Activated CD4-positive, alpha-beta T cell treated with anti-CD3 and anti-CD28 coated beads, Interleukin-2, amount 10 ng/mL, durations not matched to agents 7 days and 5 days (primary cell): ENCODE measurements at regions of chr9 and their contacts with region 1.

Region 1: GRCh38 chr9:93003552-93004407 is 54.7 kb upstream of the SUSD3 start:
- DNase-seq: peak; percentile 71
- H3K4me3 Mint-ChIP-seq: peak overlapping the region; percentile 32
- H3K27ac Mint-ChIP-seq: peak overlapping the region; percentile 83
- H3K4me1 Mint-ChIP-seq: peaks cover 56% of the 10 kb centered on the region
- H3K27me3 Mint-ChIP-seq: no peaks in the 10 kb centered on the region

Region 2: DNA sequence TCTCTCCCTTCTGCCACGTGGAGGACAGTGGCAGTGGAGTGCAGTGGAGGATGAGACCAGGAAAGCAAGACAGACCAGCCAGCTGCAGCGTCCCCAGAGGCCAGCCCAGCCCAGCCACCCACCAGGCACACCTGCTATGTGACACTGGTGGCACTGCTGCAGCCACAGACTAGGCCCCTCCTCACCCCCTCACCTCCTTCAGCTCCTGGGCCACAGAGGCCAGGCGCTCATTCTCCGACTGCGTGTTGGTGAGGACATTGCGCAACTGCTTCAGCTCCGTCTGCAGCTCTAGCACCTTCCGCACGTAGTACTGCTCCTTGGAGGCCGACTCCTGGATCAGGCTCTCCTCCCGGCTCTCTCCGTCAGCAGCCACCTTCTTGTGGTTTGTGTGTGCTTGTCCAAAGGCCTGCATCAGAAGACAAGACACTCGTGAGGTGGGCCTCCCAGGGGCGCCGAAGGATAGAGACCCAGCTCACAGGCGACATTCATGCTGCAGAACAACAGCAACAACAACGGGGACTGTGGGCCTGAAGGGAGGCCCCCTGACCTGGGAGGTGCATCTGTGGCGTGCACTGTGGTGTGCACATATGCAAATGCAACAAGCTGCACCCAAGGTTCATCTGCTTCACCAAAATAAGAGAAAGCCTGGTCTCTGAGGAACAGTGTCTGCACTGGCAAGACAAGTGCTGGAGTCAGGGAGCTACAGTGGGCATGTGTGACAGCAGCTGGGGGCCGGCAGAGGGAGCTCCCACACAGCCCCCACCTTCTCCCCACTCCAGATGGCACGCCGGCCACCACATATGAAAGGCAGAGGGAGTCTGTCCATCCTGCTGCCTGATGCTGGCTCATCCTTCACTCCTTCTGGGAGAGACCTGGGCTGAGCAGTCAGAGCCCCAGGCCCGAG is 274.7 kb before region 1 on chr9:
- CTCF ChIA-PET with region 1: no interaction called
- POLR2A ChIA-PET with region 1: no interaction called
- DNase-seq: no peak
- H3K4me3 Mint-ChIP-seq: no peak overlapping the region
- H3K27ac Mint-ChIP-seq: peak overlapping the region; percentile 36
- H3K4me1 Mint-ChIP-seq: peaks cover 25% of the 10 kb centered on the region
- H3K27me3 Mint-ChIP-seq: no peaks in the 10 kb centered on the region

Region 3: GRCh38 chr9:92942688-92943616 is 60.8 kb before region 1 on chr9:
- CTCF ChIA-PET with region 1: no interaction called
- POLR2A ChIA-PET with region 1: no interaction called
- DNase-seq: no peak
- H3K4me3 Mint-ChIP-seq: no peak overlapping the region
- H3K27ac Mint-ChIP-seq: no peak overlapping the region
- H3K4me1 Mint-ChIP-seq: peaks cover 16% of the 10 kb centered on the region
- H3K27me3 Mint-ChIP-seq: peaks cover 10% of the 10 kb centered on the region

Region 4: GRCh38 chr9:93013856-93014582 is 10.2 kb after region 1 on chr9:
- CTCF ChIA-PET with region 1: interaction called, 25 read pairs
- POLR2A ChIA-PET with region 1: no interaction called
- DNase-seq: no peak
- H3K4me3 Mint-ChIP-seq: no peak overlapping the region
- H3K27ac Mint-ChIP-seq: peak overlapping the region; percentile 58
- H3K4me1 Mint-ChIP-seq: peaks cover 15% of the 10 kb centered on the region
- H3K27me3 Mint-ChIP-seq: no peaks in the 10 kb centered on the region

Region 5: GRCh38 chr9:93020771-93021670 is 17.2 kb after region 1 on chr9:
- CTCF ChIA-PET with region 1: interaction called, 25 read pairs
- POLR2A ChIA-PET with region 1: no interaction called
- DNase-seq: peak; percentile 43
- H3K4me3 Mint-ChIP-seq: no peak overlapping the region
- H3K27ac Mint-ChIP-seq: peak overlapping the region; percentile 79
- H3K4me1 Mint-ChIP-seq: peaks cover 62% of the 10 kb centered on the region
- H3K27me3 Mint-ChIP-seq: no peaks in the 10 kb centered on the region

Region 6: DNA sequence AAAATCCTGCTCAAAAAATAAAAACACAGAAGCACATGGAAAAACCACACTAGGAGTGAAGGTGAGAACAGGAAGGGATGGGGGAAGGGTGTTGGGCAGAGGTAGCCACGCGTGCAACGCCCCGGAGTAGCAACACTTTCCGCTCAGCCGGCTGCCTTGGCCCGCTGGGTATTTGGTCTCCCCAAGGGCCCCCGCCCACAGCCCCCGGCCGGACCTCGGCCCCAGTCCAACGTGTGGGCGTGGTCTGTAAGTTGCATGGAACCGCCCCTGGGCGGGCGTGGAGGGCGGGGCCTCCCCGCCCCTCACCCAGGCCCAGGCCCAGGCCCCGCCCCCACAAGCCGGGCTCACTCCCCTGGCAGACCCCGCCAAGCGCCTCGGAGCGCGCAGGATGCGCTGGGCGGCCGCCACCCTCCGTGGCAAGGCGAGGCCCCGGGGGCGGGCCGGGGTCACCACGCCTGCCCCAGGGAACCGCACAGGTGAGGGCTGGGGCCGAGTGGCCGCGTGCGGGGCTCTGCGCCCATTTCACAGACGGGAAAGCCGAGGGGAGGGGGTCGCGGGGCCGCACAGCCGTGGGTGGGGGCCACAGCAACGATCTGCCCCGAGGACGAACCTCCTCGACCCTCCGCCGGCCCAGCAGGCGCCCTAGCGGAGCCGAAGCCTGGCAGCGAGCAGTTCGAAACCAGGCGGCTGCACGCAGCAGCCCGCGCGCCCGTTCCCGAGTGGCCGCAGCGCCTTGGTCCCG is 54.7 kb after region 1 on chr9 and contains the start of gene SUSD3:
- CTCF ChIA-PET with region 1: no interaction called
- POLR2A ChIA-PET with region 1: no interaction called
- DNase-seq: peak; percentile 75
- H3K4me3 Mint-ChIP-seq: peak within 1 kb of the TSS; percentile 91
- H3K27ac Mint-ChIP-seq: peak within 1 kb of the TSS; percentile 98
- H3K4me1 Mint-ChIP-seq: peaks cover 68% of the 10 kb centered on the region
- H3K27me3 Mint-ChIP-seq: no peaks in the 10 kb centered on the region
- total RNA-seq, gene SUSD3: 81.1 to 85.8 TPM